ENCODE measurements at regions of chr6 and their contacts with region 1.

Region 1: GRCh38 chr6:43516697-43517504 is at the starts of genes POLR1C and YIPF3:
- DNase-seq: peak; percentile 99
- ATAC-seq: peak; percentile 93
- H3K4me3 Mint-ChIP-seq: no peak within 1 kb of the TSS
- H3K27ac Mint-ChIP-seq: no peak within 1 kb of the TSS
- H3K4me1 Mint-ChIP-seq: peaks cover 34% of the 10 kb centered on the region
- H3K27me3 Mint-ChIP-seq: no peaks in the 10 kb centered on the region
- CTCF ChIP-seq: no peak
- total RNA-seq, gene POLR1C: 43.1 to 50.5 TPM
- total RNA-seq, gene YIPF3: 32.6 to 33.9 TPM

Region 2: GRCh38 chr6:43247113-43247999 is 269.5 kb before region 1 on chr6:
- CTCF ChIA-PET with region 1: no interaction called
- POLR2A ChIA-PET with region 1: no interaction called
- intact Hi-C with region 1: no loop called
- DNase-seq: peak; percentile 90
- ATAC-seq: peak; percentile 98
- H3K4me3 Mint-ChIP-seq: peak overlapping the region; percentile 77
- H3K27ac Mint-ChIP-seq: peak overlapping the region; percentile 83
- H3K4me1 Mint-ChIP-seq: peaks cover 24% of the 10 kb centered on the region
- H3K27me3 Mint-ChIP-seq: peaks cover 18% of the 10 kb centered on the region
- CTCF ChIP-seq: no peak

Region 3: DNA sequence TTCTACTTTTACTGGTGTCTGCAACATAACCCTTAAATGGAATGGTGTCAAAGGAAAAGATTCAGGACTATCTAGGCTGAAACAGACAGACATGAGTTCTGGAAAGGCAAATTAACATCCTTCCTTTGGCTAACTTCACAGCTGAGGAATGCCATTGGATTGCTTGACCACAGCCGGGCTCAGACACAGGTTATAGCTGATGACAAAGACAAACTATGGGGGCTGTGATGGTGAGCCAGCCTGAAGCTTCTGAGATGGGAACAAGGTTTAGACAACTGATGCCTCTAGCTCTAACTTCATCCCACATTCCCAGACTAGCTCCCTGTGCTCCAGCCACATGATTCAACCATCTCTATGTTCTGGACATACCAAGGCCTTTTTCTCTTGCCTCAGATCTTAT is 15.3 kb after region 1 on chr6:
- CTCF ChIA-PET with region 1: interaction called, 3 read pairs
- POLR2A ChIA-PET with region 1: interaction called, 91 read pairs
- intact Hi-C with region 1: no loop called
- DNase-seq: no peak
- ATAC-seq: no peak
- H3K4me3 Mint-ChIP-seq: no peak overlapping the region
- H3K27ac Mint-ChIP-seq: no peak overlapping the region
- H3K4me1 Mint-ChIP-seq: no peaks in the 10 kb centered on the region
- H3K27me3 Mint-ChIP-seq: no peaks in the 10 kb centered on the region
- CTCF ChIP-seq: no peak

Region 4: GRCh38 chr6:43541774-43542471 is 25.0 kb after region 1 on chr6:
- CTCF ChIA-PET with region 1: interaction called, 3 read pairs
- POLR2A ChIA-PET with region 1: interaction called, 18 read pairs
- intact Hi-C with region 1: no loop called
- DNase-seq: no peak
- ATAC-seq: no peak
- H3K4me3 Mint-ChIP-seq: no peak overlapping the region
- H3K27ac Mint-ChIP-seq: peak overlapping the region; percentile 25
- H3K4me1 Mint-ChIP-seq: no peaks in the 10 kb centered on the region
- H3K27me3 Mint-ChIP-seq: no peaks in the 10 kb centered on the region
- CTCF ChIP-seq: no peak

Region 5: DNA sequence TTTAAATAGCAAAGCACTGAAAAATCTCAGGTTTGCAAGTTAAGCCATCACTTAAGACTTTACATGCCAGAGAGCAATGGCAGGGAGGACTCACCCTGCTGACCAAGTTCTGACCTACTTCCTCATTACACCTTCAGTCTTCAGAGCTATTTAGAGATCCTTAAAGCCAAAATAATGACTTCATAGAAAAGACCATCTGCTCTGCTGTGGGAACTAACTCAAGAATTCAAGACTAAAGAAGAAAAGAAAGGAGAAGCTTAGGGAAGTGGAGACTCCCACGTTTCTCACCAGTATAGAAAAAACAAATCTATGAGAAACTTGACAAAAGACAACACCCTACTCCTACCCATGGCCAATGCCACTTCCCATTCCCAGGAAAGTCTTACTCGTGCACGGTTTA is 30.3 kb after region 1 on chr6:
- CTCF ChIA-PET with region 1: interaction called, 3 read pairs
- POLR2A ChIA-PET with region 1: interaction called, 18 read pairs
- intact Hi-C with region 1: no loop called
- DNase-seq: no peak
- ATAC-seq: no peak
- H3K4me3 Mint-ChIP-seq: no peak overlapping the region
- H3K27ac Mint-ChIP-seq: no peak overlapping the region
- H3K4me1 Mint-ChIP-seq: no peaks in the 10 kb centered on the region
- H3K27me3 Mint-ChIP-seq: no peaks in the 10 kb centered on the region
- CTCF ChIP-seq: no peak

Region 6: GRCh38 chr6:43570876-43571441 is 54.1 kb after region 1 on chr6:
- CTCF ChIA-PET with region 1: no interaction called
- POLR2A ChIA-PET with region 1: interaction called, 20 read pairs
- intact Hi-C with region 1: no loop called
- DNase-seq: peak; percentile 10
- ATAC-seq: peak; percentile 45
- H3K4me3 Mint-ChIP-seq: no peak overlapping the region
- H3K27ac Mint-ChIP-seq: peak overlapping the region; percentile 90
- H3K4me1 Mint-ChIP-seq: peaks cover 26% of the 10 kb centered on the region
- H3K27me3 Mint-ChIP-seq: no peaks in the 10 kb centered on the region
- CTCF ChIP-seq: no peak

Region 7: DNA sequence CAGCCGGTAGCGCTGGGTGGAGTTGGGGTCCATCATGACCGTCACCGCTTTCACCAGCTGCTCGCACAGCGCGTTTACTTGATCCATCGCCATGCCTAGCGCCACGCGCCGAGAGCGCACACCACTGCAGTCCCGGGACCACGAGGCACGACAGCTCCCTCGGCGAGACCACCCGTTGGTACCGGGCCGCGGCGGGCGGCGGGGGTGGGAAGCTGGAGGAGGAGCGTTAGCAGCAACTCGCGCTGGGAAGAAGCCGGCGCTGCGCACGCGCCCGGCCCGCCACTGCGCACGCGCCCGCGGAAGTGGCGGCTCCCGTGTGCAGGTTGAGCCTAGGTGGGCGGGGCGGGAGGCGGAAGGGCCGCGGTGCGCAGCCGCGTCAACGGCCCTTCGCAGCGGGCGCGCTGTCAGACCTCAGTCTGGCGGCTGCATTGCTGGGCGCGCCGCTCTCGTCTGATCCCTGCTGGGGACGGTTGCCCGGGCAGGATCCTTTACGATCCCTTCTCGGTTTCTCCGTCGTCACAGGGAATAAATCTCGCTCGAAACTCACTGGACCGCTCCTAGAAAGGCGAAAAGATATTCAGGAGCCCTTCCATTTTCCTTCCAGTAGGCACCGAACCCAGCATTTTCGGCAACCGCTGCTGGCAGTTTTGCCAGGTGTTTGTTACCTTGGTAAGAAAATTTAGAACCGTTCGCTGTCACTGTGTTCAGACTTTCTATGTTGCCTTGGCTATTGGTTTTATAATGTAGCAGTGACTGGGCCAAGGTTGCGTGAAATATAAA is 59.1 kb after region 1 on chr6 and contains the starts of genes POLH and XPO5:
- CTCF ChIA-PET with region 1: no interaction called
- POLR2A ChIA-PET with region 1: interaction called, 20 read pairs
- intact Hi-C with region 1: no loop called
- DNase-seq: peak; percentile 93
- ATAC-seq: peak; percentile 94
- H3K4me3 Mint-ChIP-seq: peak within 1 kb of the TSS; percentile 90
- H3K27ac Mint-ChIP-seq: peak within 1 kb of the TSS; percentile 84
- H3K4me1 Mint-ChIP-seq: peaks cover 41% of the 10 kb centered on the region
- H3K27me3 Mint-ChIP-seq: no peaks in the 10 kb centered on the region
- CTCF ChIP-seq: no peak
- total RNA-seq, gene POLH: 37.9 to 42.1 TPM
- total RNA-seq, gene XPO5: 92.3 to 92.6 TPM

Region 8: DNA sequence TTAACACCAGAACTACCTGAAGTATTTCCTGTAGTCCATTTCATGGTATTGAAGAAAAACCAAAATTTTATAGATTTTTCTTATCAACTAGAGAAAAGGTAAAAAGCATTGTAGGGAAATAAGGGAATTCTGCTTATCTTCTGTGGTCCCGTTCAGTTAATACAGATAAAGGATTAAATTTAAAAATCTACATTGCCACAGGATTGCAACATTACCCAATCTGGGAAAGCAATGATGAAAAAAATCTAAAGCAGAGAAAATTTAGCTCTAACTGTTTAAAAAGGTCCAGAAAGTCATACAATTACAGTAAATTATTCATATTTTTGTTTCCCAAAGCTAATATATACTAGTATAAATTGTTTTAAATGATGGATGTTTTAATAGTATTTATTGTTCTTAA is 77.0 kb after region 1 on chr6:
- CTCF ChIA-PET with region 1: no interaction called
- POLR2A ChIA-PET with region 1: no interaction called
- intact Hi-C with region 1: no loop called
- DNase-seq: no peak
- ATAC-seq: no peak
- H3K4me3 Mint-ChIP-seq: no peak overlapping the region
- H3K27ac Mint-ChIP-seq: no peak overlapping the region
- H3K4me1 Mint-ChIP-seq: no peaks in the 10 kb centered on the region
- H3K27me3 Mint-ChIP-seq: no peaks in the 10 kb centered on the region
- CTCF ChIP-seq: no peak